ENCODE measurements at regions of chr14 and their contacts with region 1.

Region 1: DNA sequence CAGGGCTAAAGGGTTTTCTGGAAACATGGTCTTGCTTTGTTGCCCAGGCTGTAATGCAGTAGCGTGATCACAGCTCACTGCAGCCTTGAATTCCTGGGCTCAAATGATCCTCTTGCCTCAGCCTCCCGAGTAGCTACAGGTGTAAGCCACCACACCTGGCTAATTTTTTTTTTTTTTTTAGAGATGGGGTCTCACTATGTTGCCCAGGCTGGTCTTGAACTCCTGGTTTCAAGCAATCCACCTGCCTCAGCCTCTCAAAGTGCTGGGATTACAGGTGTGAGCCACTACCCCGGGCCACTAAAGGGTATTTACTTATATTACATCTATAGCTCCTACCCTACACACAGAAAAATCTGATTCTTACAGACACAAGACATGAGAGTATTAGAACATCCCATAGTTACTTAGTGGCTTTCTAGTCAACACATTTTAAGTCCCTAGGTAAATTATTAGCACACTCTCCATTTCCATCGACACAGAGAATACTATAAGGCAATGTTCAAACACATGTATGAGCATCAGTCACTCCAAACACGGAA is 6.2 kb upstream of the DCAF11 start:
- DNase-seq: no peak
- ATAC-seq: no peak
- H3K4me3 Mint-ChIP-seq: peak overlapping the region; percentile 17
- H3K27ac Mint-ChIP-seq: peak overlapping the region; percentile 98
- H3K4me1 Mint-ChIP-seq: peaks cover 36% of the 10 kb centered on the region
- H3K27me3 Mint-ChIP-seq: no peaks in the 10 kb centered on the region

Region 2: DNA sequence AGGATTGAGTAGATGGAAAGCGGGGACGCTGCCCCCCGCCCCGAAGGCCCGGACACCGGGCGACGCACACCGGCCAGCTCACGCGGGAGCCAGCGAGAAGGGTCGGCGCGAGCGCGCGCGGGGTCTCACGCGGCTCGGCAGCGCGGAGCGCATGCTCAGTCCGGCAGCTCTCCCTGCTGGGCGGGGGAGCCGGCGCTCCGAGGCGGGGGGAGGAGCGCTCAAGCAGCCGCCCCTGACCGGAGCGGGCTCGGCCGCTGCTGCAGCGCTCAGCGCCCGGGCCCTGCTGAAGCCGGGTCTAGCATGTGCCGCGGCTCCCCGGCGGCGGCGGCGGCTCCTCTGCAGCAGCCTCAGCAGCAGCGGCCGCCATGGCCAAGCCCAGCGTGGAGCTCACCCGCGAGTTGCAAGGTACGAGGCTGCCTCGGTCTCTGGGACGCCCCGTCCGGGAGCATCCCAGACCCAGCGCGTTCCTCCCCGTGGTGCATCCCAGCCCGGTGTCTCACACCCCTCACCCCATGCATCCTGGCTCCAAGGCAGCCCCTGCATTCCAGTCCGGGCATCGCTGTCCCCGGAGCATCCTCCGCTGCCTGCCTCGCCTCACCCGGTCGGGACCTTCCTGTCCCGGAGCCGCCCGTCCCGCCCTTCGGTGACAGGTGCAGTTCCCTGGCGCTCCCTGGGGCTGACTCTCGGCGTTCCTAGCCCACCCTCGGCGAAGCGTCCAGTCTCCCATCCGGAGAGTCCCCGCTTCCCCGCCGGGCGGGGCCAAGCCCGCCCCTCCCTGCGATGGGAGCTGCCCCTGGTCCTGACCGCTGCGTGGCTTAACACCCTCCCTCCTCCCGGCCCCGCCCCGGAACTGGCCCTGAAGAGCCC is 56.4 kb before region 1 on chr14 and contains the start of gene CARMIL3:
- CTCF ChIA-PET with region 1: interaction called, 83 read pairs
- DNase-seq: peak; percentile 79
- ATAC-seq: peak; percentile 88
- H3K4me3 Mint-ChIP-seq: peak within 1 kb of the TSS; percentile 74
- H3K27ac Mint-ChIP-seq: peak within 1 kb of the TSS; percentile 32
- H3K4me1 Mint-ChIP-seq: peaks cover 16% of the 10 kb centered on the region
- H3K27me3 Mint-ChIP-seq: peaks cover 32% of the 10 kb centered on the region
- total RNA-seq, gene CARMIL3: 2.9 to 3.3 TPM

Region 3: GRCh38 chr14:24058260-24058950 is 50.0 kb before region 1 on chr14:
- CTCF ChIA-PET with region 1: interaction called, 83 read pairs
- DNase-seq: peak; percentile 69
- ATAC-seq: peak; percentile 74
- H3K4me3 Mint-ChIP-seq: no peak overlapping the region
- H3K27ac Mint-ChIP-seq: no peak overlapping the region
- H3K4me1 Mint-ChIP-seq: peaks cover under 1% of the 10 kb centered on the region
- H3K27me3 Mint-ChIP-seq: peaks cover 11% of the 10 kb centered on the region

Region 4: GRCh38 chr14:24080888-24081738 is 27.3 kb before region 1 on chr14:
- CTCF ChIA-PET with region 1: interaction called, 37 read pairs
- DNase-seq: peak; percentile 90
- ATAC-seq: peak; percentile 93
- H3K4me3 Mint-ChIP-seq: peak overlapping the region; percentile 75
- H3K27ac Mint-ChIP-seq: peak overlapping the region; percentile 81
- H3K4me1 Mint-ChIP-seq: peaks cover 17% of the 10 kb centered on the region
- H3K27me3 Mint-ChIP-seq: no peaks in the 10 kb centered on the region

Region 5: GRCh38 chr14:24093901-24094761 is 14.3 kb before region 1 on chr14 and contains the start of gene PCK2:
- CTCF ChIA-PET with region 1: interaction called, 225 read pairs
- DNase-seq: peak; percentile 89
- ATAC-seq: peak; percentile 74
- H3K4me3 Mint-ChIP-seq: peak within 1 kb of the TSS; percentile 99
- H3K27ac Mint-ChIP-seq: peak within 1 kb of the TSS; percentile 99
- H3K4me1 Mint-ChIP-seq: peaks cover 33% of the 10 kb centered on the region
- H3K27me3 Mint-ChIP-seq: no peaks in the 10 kb centered on the region
- total RNA-seq, gene PCK2: 61.7 to 87.0 TPM

Region 6: DNA sequence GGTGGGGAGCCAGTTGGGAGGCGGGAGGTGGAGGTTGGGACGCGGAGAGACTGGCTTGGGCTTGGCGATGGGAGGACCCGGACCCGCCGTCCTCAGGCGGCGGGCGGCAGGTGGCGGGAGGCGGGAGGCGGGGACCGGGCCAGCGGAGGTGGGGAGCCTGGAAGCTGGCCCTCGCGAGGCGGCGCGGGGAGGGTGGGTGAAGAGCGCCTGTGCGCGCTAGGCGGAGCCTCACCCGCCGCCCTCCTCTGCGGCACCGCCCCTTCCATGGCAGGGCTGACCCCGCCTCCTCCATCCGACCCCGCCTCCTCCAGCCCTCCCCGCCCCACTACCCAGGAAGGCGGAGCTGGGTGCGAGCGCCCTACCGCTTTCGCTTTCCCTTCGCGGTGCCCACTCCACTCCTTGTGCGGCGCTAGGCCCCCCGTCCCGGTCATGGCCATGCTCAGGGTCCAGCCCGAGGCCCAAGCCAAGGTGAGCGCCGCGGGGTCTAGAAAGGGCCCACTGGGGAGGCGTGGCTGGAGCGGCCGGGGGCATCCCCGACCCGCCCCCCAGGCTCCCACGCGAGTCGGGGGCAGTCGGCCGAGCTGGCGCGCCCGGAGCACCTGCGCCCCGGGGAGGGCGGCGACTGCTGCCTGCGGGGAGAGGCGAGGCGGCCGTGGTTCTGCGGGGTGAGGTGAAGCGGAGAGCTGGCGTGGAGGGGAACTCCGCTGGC is 27.6 kb after region 1 on chr14 and contains the start of gene PSME1:
- CTCF ChIA-PET with region 1: interaction called, 52 read pairs
- DNase-seq: peak; percentile 96
- ATAC-seq: peak; percentile 94
- H3K4me3 Mint-ChIP-seq: peak within 1 kb of the TSS; percentile 91
- H3K27ac Mint-ChIP-seq: peak within 1 kb of the TSS; percentile 85
- H3K4me1 Mint-ChIP-seq: peaks cover 52% of the 10 kb centered on the region
- H3K27me3 Mint-ChIP-seq: no peaks in the 10 kb centered on the region
- total RNA-seq, gene PSME1: 420 to 454 TPM

Region 7: DNA sequence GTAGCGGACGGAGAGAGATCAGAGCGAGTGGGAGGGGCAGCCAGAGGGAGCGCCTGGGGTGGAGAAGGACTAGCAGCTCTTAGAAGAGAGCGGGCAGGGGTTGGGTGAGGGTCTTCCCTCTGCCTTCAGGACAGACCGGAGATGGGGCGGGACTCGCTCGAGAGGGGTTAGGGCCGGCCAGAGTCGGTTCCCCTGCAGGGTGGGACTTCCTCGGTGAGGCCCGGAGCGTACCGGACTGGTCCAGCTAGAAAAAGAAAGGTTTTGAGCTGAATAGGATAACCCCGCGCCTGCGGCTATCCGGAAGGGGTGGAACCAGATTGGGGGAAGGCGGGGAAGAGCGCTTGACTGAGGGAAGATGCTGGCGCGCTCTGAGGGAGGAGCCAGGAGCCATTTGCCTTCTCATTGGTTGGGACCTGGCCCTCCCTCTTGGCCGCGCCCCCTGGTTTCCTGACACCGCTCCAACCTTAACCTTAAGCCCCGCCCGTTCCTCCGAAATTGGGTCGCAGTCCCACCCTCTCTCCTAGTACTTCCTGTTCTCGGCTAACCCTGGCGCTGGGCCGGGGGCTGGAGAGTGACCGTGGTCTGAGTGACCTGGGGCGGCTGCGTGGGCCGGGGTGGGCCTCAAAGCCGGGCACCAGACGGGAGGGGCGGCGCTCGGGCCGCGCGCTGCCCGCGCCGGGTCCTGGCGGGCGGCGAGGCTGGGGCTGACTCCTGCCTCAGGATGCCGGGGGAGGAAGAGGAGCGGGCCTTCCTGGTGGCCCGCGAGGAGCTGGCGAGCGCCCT is 38.8 kb after region 1 on chr14 and contains the start of gene RNF31:
- CTCF ChIA-PET with region 1: interaction called, 11 read pairs
- DNase-seq: peak; percentile 99
- ATAC-seq: peak; percentile 88
- H3K4me3 Mint-ChIP-seq: peak within 1 kb of the TSS; percentile 94
- H3K27ac Mint-ChIP-seq: peak within 1 kb of the TSS; percentile 99
- H3K4me1 Mint-ChIP-seq: peaks cover 67% of the 10 kb centered on the region
- H3K27me3 Mint-ChIP-seq: no peaks in the 10 kb centered on the region
- total RNA-seq, gene RNF31: 129 to 149 TPM